ENCODE measurements at regions of chr5 and their contacts with region 1.

Region 1: DNA sequence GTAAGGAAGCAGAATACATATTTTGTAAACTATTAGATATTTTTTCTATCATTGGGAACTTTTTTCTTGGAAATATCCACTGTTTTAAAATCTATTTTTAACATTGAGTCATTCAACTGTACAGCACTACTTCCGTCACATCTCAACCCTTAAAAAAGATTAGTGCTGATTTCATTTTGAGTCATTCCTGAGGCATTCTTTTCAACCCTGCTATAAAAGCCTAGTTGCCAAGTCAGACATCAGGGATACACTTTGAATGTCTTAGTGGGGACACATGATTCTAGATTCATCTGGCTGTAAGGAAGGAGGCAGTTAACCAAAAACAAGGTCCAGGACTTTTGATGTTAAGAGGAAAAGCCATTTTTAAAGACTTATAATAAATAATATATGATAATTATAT is 160.9 kb downstream of the GIN1 start:
- DNase-seq: no peak
- H3K4me3 ChIP-seq: no peak overlapping the region
- H3K27ac ChIP-seq: no peak overlapping the region
- H3K4me1 ChIP-seq: no peaks in the 10 kb centered on the region
- H3K27me3 ChIP-seq: no peaks in the 10 kb centered on the region
- CTCF ChIP-seq: no peak
- EP300 ChIP-seq: no peak
- POLR2A ChIP-seq: no peak

Region 2: GRCh38 chr5:103258368-103258956 is 299.4 kb after region 1 on chr5 and contains the start of gene MACIR:
- intact Hi-C with region 1: loop called in 1 of 4 experiments (anchors 5 kb)
- DNase-seq: peak; percentile 94 to 96 (median 94)
- H3K4me3 ChIP-seq: peak within 1 kb of the TSS; percentile 89
- H3K27ac ChIP-seq: peak within 1 kb of the TSS; percentile 67 to 74
- H3K4me1 ChIP-seq: no peaks in the 10 kb centered on the region
- H3K27me3 ChIP-seq: no peaks in the 10 kb centered on the region
- CTCF ChIP-seq: no peak
- EP300 ChIP-seq: no peak
- POLR2A ChIP-seq: no peak
- total RNA-seq, gene MACIR: 3.4 to 6.3 (median 4.1) TPM

Region 3: GRCh38 chr5:103305829-103306228 is 346.8 kb after region 1 on chr5:
- intact Hi-C with region 1: no loop called
- DNase-seq: no peak
- H3K4me3 ChIP-seq: no peak overlapping the region
- H3K27ac ChIP-seq: no peak overlapping the region
- H3K4me1 ChIP-seq: no peaks in the 10 kb centered on the region
- H3K27me3 ChIP-seq: no peaks in the 10 kb centered on the region
- CTCF ChIP-seq: no peak
- EP300 ChIP-seq: no peak
- POLR2A ChIP-seq: no peak